ENCODE measurements at regions of chr3 and their contacts with region 1.

Region 1: DNA sequence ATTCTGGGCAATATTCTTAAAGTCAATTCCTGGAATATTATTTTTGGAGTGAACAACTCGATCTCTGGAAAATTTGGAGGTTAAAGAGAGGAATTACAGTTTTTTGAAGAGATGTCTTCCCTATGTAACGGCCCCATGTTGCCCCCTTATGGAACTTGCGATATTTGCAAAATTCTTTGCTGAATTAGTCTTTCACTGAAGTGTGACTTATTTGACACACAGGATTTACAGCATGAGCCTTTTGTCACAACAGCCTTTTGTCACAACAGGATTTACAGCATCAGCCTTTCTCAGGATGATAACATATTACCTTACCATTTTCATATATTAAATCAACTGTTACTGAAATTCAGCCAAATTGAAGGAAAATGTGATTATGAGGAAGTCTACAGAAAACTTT is 37.8 kb upstream of the SPTSSB start:
- DNase-seq: peak in 4 of 9 experiments; percentile 39 to 69 (median 54)
- ATAC-seq: peak; percentile 48
- H3K4me3 ChIP-seq: no peak overlapping the region
- H3K4me3 Mint-ChIP-seq: no peak overlapping the region
- H3K27ac ChIP-seq: no peak overlapping the region
- H3K27ac Mint-ChIP-seq: no peak overlapping the region
- H3K4me1 ChIP-seq: peaks cover 17% of the 10 kb centered on the region
- H3K4me1 Mint-ChIP-seq: peaks cover 25% of the 10 kb centered on the region
- H3K27me3 ChIP-seq: no peaks in the 10 kb centered on the region
- H3K27me3 Mint-ChIP-seq: peaks cover 6% of the 10 kb centered on the region
- CTCF ChIP-seq: peak; percentile 77

Region 2: DNA sequence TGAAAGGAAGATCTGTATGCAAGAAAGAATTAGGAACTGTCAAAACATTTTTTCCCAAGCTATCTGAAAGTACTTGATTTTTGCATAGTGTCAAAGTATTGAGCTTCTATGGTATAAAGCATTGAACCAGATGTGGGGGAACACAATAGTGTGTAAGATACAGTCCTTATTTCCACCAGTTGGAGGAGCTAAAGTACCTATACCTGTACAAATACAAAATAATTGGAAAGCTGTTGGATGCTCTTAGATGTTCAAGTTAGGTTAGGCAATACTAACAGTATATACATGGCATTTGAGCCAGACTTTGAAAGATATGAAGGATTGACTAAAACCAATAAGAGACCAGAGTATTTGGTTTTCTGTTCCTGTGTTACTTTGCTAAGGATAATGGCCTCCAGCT is 452.3 kb before region 1 on chr3:
- CTCF ChIA-PET with region 1: no interaction called
- POLR2A ChIA-PET with region 1: no interaction called
- intact Hi-C with region 1: no loop called
- DNase-seq: peak in 1 of 9 experiments; percentile 12
- ATAC-seq: no peak
- H3K4me3 ChIP-seq: no peak overlapping the region
- H3K4me3 Mint-ChIP-seq: no peak overlapping the region
- H3K27ac ChIP-seq: no peak overlapping the region
- H3K27ac Mint-ChIP-seq: no peak overlapping the region
- H3K4me1 ChIP-seq: no peaks in the 10 kb centered on the region
- H3K4me1 Mint-ChIP-seq: no peaks in the 10 kb centered on the region
- H3K27me3 ChIP-seq: no peaks in the 10 kb centered on the region
- H3K27me3 Mint-ChIP-seq: peaks cover 12% of the 10 kb centered on the region
- CTCF ChIP-seq: no peak

Region 3: GRCh38 chr3:161274719-161275298 is 134.3 kb before region 1 on chr3:
- CTCF ChIA-PET with region 1: interaction called, 82 read pairs
- POLR2A ChIA-PET with region 1: no interaction called
- intact Hi-C with region 1: loop called (anchors 1 kb)
- DNase-seq: peak in 4 of 9 experiments; percentile 36 to 65 (median 46)
- ATAC-seq: peak; percentile 31
- H3K4me3 ChIP-seq: no peak overlapping the region
- H3K4me3 Mint-ChIP-seq: no peak overlapping the region
- H3K27ac ChIP-seq: no peak overlapping the region
- H3K27ac Mint-ChIP-seq: no peak overlapping the region
- H3K4me1 ChIP-seq: no peaks in the 10 kb centered on the region
- H3K4me1 Mint-ChIP-seq: peaks cover 2% of the 10 kb centered on the region
- H3K27me3 ChIP-seq: no peaks in the 10 kb centered on the region
- H3K27me3 Mint-ChIP-seq: no peaks in the 10 kb centered on the region
- CTCF ChIP-seq: peak; percentile 65

Region 4: DNA sequence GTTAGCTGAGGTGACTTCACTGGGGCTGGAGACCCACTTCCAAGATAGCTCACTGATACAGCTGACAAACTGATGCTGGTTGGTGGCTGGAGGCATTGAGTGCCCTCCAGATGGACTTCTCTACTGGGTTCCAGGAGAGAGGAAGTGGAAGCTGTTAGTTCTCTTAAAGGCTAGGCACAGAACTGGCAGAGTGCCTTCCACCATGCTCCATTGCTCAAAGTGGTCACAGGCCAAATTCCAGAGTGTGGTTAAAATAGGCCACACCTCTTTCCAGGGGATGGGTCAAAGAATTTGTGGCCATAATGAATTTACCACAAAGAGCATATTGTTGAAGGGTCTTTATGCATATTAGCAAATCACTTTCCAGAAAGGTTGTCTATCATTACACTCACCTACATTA is 113.7 kb before region 1 on chr3:
- CTCF ChIA-PET with region 1: interaction called, 11 read pairs
- POLR2A ChIA-PET with region 1: no interaction called
- intact Hi-C with region 1: loop called in 1 of 2 experiments (anchors 10 kb)
- DNase-seq: no peak
- ATAC-seq: no peak
- H3K4me3 ChIP-seq: no peak overlapping the region
- H3K4me3 Mint-ChIP-seq: no peak overlapping the region
- H3K27ac ChIP-seq: no peak overlapping the region
- H3K27ac Mint-ChIP-seq: no peak overlapping the region
- H3K4me1 ChIP-seq: no peaks in the 10 kb centered on the region
- H3K4me1 Mint-ChIP-seq: no peaks in the 10 kb centered on the region
- H3K27me3 ChIP-seq: peaks cover 0 to 2% of the 10 kb centered on the region in 2 experiments
- H3K27me3 Mint-ChIP-seq: peaks cover 3% of the 10 kb centered on the region
- CTCF ChIP-seq: no peak

Region 5: DNA sequence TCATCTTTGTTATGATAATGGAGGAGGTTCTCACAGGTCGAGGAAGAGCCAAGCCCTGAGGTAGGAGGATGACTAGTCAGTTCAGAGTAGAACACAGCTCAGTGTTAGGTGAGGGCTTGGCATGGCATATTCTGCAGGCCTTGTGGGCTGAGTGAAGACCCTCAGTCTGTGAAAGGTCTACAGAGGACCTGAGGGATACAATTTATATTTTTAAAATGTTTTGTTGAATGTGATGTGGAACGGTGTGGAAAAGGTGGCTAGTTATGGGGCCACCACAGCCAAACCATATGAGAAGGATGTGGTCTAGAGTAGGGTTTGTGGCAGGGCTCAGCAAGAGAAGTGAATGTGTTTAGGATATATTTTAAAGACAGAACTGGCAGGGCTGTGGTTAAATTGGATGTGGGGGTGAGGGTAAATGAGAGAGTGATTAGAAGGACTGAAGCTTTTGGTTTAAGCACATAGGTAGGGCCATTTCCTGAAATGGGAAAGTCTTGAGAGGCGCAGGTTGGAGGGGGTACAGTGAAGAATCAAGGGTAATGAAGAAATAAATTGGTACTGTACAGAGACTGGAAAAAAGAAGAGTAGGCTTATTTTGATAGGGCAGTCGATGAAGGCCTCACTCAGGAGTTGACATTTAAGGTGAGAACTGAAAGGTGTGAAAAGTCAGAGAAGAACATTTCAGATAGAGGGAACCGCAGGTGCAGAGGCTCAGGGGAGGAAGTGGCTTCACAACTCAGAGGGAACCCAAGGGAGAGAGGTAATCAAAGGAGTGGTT is 98.2 kb before region 1 on chr3:
- CTCF ChIA-PET with region 1: interaction called, 44 read pairs
- POLR2A ChIA-PET with region 1: interaction called, 3 read pairs
- intact Hi-C with region 1: loop called (anchors 2 to 10 kb)
- DNase-seq: peak; percentile 3 to 88 (median 42)
- ATAC-seq: peak; percentile 76
- H3K4me3 ChIP-seq: no peak overlapping the region
- H3K4me3 Mint-ChIP-seq: peak overlapping the region; percentile 58
- H3K27ac ChIP-seq: peak overlapping the region in 1 of 2 experiments; percentile 38
- H3K27ac Mint-ChIP-seq: peak overlapping the region; percentile 85
- H3K4me1 ChIP-seq: peaks cover 47% of the 10 kb centered on the region
- H3K4me1 Mint-ChIP-seq: peaks cover 64% of the 10 kb centered on the region
- H3K27me3 ChIP-seq: peaks cover 0 to 4% of the 10 kb centered on the region in 2 experiments
- H3K27me3 Mint-ChIP-seq: no peaks in the 10 kb centered on the region
- CTCF ChIP-seq: no peak

Region 6: GRCh38 chr3:161371430-161372326 is 37.4 kb before region 1 on chr3 and contains the start of gene SPTSSB:
- CTCF ChIA-PET with region 1: interaction called, 9 read pairs
- POLR2A ChIA-PET with region 1: no interaction called
- intact Hi-C with region 1: loop called in 1 of 2 experiments (anchors 5 kb)
- DNase-seq: peak; percentile 3 to 72 (median 56)
- ATAC-seq: peak; percentile 75
- H3K4me3 ChIP-seq: peak within 1 kb of the TSS; percentile 54 to 57
- H3K4me3 Mint-ChIP-seq: peak within 1 kb of the TSS; percentile 87
- H3K27ac ChIP-seq: no peak within 1 kb of the TSS
- H3K27ac Mint-ChIP-seq: no peak within 1 kb of the TSS
- H3K4me1 ChIP-seq: peaks cover 13% of the 10 kb centered on the region
- H3K4me1 Mint-ChIP-seq: peaks cover 16% of the 10 kb centered on the region
- H3K27me3 ChIP-seq: peaks cover 13 to 16% of the 10 kb centered on the region in 2 experiments
- H3K27me3 Mint-ChIP-seq: peaks cover 27% of the 10 kb centered on the region
- CTCF ChIP-seq: no peak
- total RNA-seq, gene SPTSSB: not detected

Region 7: GRCh38 chr3:161548301-161548700 is 139.2 kb after region 1 on chr3:
- CTCF ChIA-PET with region 1: no interaction called
- POLR2A ChIA-PET with region 1: no interaction called
- intact Hi-C with region 1: no loop called
- DNase-seq: no peak
- ATAC-seq: no peak
- H3K4me3 ChIP-seq: no peak overlapping the region
- H3K4me3 Mint-ChIP-seq: no peak overlapping the region
- H3K27ac ChIP-seq: no peak overlapping the region
- H3K27ac Mint-ChIP-seq: no peak overlapping the region
- H3K4me1 ChIP-seq: no peaks in the 10 kb centered on the region
- H3K4me1 Mint-ChIP-seq: no peaks in the 10 kb centered on the region
- H3K27me3 ChIP-seq: no peaks in the 10 kb centered on the region
- H3K27me3 Mint-ChIP-seq: peaks cover 1% of the 10 kb centered on the region
- CTCF ChIP-seq: no peak

Region 8: GRCh38 chr3:161740421-161740820 is 331.4 kb after region 1 on chr3:
- CTCF ChIA-PET with region 1: no interaction called
- POLR2A ChIA-PET with region 1: no interaction called
- intact Hi-C with region 1: no loop called
- DNase-seq: no peak
- ATAC-seq: no peak
- H3K4me3 ChIP-seq: no peak overlapping the region
- H3K4me3 Mint-ChIP-seq: no peak overlapping the region
- H3K27ac ChIP-seq: no peak overlapping the region
- H3K27ac Mint-ChIP-seq: no peak overlapping the region
- H3K4me1 ChIP-seq: no peaks in the 10 kb centered on the region
- H3K4me1 Mint-ChIP-seq: no peaks in the 10 kb centered on the region
- H3K27me3 ChIP-seq: no peaks in the 10 kb centered on the region
- H3K27me3 Mint-ChIP-seq: no peaks in the 10 kb centered on the region
- CTCF ChIP-seq: no peak

Measured in CD8-positive, alpha-beta T cell (primary cell).